ENCODE measurements at regions of chr3 and their contacts with region 1.

Region 1: GRCh38 chr3:31610700-31611275 is 78.1 kb downstream of the STT3B start:
- DNase-seq: peak; percentile 36
- H3K4me3 ChIP-seq: no peak overlapping the region
- H3K27ac ChIP-seq: no peak overlapping the region
- H3K4me1 ChIP-seq: peaks cover 4% of the 10 kb centered on the region
- H3K27me3 ChIP-seq: no peaks in the 10 kb centered on the region
- CTCF ChIP-seq: peak; percentile 48 to 64

Region 2: GRCh38 chr3:31622636-31623288 is 12.0 kb after region 1 on chr3:
- CTCF ChIA-PET with region 1: no interaction called
- dilution Hi-C with region 1: no loop called
- in situ Hi-C with region 1: no loop called
- intact Hi-C with region 1: no loop called
- DNase-seq: no peak
- H3K4me3 ChIP-seq: no peak overlapping the region
- H3K27ac ChIP-seq: no peak overlapping the region
- H3K4me1 ChIP-seq: no peaks in the 10 kb centered on the region
- H3K27me3 ChIP-seq: no peaks in the 10 kb centered on the region
- CTCF ChIP-seq: no peak

Region 3: DNA sequence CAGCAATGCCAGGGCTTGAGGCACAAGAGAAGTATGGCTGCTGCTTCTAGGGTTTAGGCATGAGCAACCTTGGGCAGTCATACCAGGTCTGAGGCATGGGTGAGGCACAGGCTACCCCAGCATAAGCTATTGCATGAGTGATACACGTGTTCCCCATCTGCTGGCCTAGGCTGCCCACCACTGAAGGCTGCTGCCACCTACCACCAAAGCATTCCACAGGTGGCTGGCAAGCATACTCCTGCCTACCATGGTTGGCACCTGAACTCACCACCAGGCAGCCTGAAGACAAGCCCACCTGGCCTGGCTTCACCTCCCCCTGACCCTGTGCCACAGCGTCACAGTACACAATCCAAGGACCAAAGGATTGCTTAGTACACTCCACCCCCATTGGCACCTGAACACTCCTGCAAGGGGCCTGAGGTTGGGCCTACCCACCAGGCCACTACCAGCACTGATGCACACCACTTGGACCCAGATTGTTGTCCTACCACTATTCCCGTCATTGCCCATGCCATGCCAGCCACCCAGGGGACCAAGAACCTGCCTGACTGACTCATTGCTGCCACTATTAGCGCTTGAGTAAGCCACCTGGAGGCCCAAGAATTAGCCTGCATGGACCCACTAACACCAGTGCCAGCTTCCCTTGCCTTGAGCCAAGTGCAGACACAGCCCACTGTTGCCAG is 37.6 kb after region 1 on chr3:
- CTCF ChIA-PET with region 1: no interaction called
- dilution Hi-C with region 1: no loop called
- in situ Hi-C with region 1: no loop called
- intact Hi-C with region 1: no loop called
- DNase-seq: no peak
- H3K4me3 ChIP-seq: no peak overlapping the region
- H3K27ac ChIP-seq: no peak overlapping the region
- H3K4me1 ChIP-seq: no peaks in the 10 kb centered on the region
- H3K27me3 ChIP-seq: no peaks in the 10 kb centered on the region
- CTCF ChIP-seq: no peak

Region 4: GRCh38 chr3:31768479-31769123 is 157.8 kb after region 1 on chr3:
- CTCF ChIA-PET with region 1: no interaction called
- dilution Hi-C with region 1: no loop called
- in situ Hi-C with region 1: no loop called
- intact Hi-C with region 1: loop called (anchors 10 kb)
- DNase-seq: no peak
- H3K4me3 ChIP-seq: no peak overlapping the region
- H3K27ac ChIP-seq: no peak overlapping the region
- H3K4me1 ChIP-seq: no peaks in the 10 kb centered on the region
- H3K27me3 ChIP-seq: no peaks in the 10 kb centered on the region
- CTCF ChIP-seq: peak; percentile 31 to 54

Region 5: DNA sequence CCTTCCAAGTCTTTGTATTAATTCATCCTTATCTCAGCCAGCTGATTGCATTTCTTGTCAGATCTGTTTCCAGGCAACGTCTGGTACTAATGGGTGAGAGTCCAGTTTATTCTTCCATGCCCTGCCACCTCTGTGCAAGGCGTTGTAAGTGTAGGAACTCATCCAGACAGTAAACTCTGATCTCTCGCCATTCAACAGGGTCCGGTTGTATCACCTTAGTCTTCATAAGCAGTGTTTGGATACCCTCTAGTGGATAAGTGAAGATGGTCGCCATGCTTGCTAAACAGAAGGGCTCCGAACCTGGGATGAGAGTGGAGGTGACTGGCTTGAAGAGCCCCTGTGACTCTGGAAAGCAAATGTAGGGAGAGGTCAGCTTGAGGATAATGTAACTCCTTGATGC is 729.3 kb after region 1 on chr3:
- CTCF ChIA-PET with region 1: no interaction called
- dilution Hi-C with region 1: no loop called
- in situ Hi-C with region 1: no loop called
- intact Hi-C with region 1: loop called (anchors 10 kb)
- DNase-seq: peak; percentile 30
- H3K4me3 ChIP-seq: no peak overlapping the region
- H3K27ac ChIP-seq: no peak overlapping the region
- H3K4me1 ChIP-seq: no peaks in the 10 kb centered on the region
- H3K27me3 ChIP-seq: no peaks in the 10 kb centered on the region
- CTCF ChIP-seq: peak; percentile 54 to 63